ENCODE measurements at regions of chr3 and their contacts with region 1.

Region 1: DNA sequence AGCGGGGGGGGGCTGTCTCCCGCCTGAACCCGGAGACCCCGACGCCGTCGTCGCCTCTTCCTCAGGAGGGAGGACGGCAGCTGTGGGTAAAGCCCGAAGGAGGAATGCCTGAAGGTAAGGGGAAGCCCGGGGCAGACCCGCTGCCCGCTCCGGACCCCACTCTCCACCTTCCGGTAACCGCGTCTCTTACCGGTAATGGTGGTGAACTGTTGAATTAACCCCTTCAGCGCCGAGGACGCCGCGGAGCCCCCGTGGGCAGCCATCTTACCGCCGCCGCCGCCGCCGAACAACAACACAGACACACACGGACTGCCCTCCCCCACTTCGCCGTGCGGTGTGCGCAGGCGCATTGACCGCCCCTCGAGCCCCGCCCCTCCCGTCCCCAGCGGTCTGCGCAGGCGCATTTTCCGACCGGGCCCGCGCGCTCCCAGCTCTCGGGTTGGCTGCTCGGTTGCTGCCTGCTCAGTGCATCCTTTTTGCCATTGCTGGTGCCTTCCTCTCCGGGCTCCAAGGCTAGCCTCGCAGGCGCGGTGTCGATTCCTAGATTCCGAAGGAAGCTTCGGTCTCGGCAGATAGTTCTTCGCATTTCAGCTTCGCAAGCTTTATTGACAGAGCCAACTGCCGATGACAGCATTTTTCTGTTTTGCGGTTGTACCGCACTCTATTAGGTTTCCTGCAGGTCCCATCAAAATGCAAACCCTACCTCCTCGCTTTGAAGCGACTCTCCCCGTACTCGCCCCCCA is at the start of gene UBXN7:
- H3K4me3 Mint-ChIP-seq: peak within 1 kb of the TSS; percentile 98
- H3K27ac Mint-ChIP-seq: peak within 1 kb of the TSS; percentile 94
- H3K4me1 Mint-ChIP-seq: peaks cover 17% of the 10 kb centered on the region
- H3K27me3 Mint-ChIP-seq: no peaks in the 10 kb centered on the region

Region 2: GRCh38 chr3:195030791-195031321 is 1401.5 kb before region 1 on chr3:
- intact Hi-C with region 1: no loop called
- H3K4me3 Mint-ChIP-seq: no peak overlapping the region
- H3K27ac Mint-ChIP-seq: no peak overlapping the region
- H3K4me1 Mint-ChIP-seq: peaks cover 14% of the 10 kb centered on the region
- H3K27me3 Mint-ChIP-seq: peaks cover 5% of the 10 kb centered on the region

Region 3: GRCh38 chr3:196317687-196318467 is 114.4 kb before region 1 on chr3 and contains the start of gene DYNLT2B:
- intact Hi-C with region 1: loop called (anchors 5 kb)
- H3K4me3 Mint-ChIP-seq: peak within 1 kb of the TSS; percentile 98
- H3K27ac Mint-ChIP-seq: peak within 1 kb of the TSS; percentile 94
- H3K4me1 Mint-ChIP-seq: peaks cover 41% of the 10 kb centered on the region
- H3K27me3 Mint-ChIP-seq: no peaks in the 10 kb centered on the region